ENCODE measurements at regions of chr2 and their contacts with region 1.

Region 1: DNA sequence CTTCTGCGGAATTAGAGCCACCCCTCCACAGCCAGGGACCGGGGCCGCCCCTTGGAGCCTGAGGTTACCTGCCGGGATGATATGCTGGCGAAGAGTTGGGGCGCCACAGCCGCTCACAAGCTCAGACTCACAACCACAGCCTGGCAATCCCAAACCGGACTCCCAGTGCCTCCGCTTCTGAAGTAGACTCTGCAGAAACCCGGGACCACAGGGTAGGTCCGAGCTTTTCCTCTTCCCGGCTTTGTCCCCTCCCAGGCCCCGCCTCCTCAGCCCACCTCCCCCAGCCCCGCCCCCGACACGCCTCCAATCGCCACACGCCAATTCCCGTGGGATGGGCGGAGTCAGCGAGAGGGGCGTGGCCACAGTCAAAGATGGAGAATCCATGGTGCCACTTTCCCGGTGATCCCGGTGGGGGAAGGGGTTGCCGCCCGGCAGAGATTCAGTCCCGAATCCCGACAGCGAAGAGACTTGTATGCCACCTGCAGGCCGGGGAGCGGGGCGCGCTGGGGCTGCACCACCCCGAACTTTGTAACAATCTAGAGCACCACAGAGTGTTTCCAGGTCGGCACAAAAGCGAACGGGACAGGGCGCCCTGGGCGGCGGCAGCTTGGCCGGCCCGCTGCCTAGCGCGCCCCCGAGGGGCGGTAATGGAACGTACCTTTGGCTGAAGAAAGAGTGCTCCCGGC is at the start of gene IDH1:
- DNase-seq: peak; percentile 87
- H3K4me3 Mint-ChIP-seq: peak within 1 kb of the TSS; percentile 94
- H3K27ac Mint-ChIP-seq: peak within 1 kb of the TSS; percentile 69
- H3K4me1 Mint-ChIP-seq: peaks cover 30% of the 10 kb centered on the region
- H3K27me3 Mint-ChIP-seq: no peaks in the 10 kb centered on the region
- total RNA-seq, gene IDH1: 42.7 and 46.1 TPM in 2 replicates

Region 2: GRCh38 chr2:207710814-207711740 is 543.9 kb before region 1 on chr2 and contains the start of gene CCNYL1:
- intact Hi-C with region 1: loop called (anchors 1 kb)
- DNase-seq: peak; percentile 99
- H3K4me3 Mint-ChIP-seq: peak within 1 kb of the TSS; percentile 96
- H3K27ac Mint-ChIP-seq: peak within 1 kb of the TSS; percentile 87
- H3K4me1 Mint-ChIP-seq: peaks cover 21% of the 10 kb centered on the region
- H3K27me3 Mint-ChIP-seq: no peaks in the 10 kb centered on the region
- total RNA-seq, gene CCNYL1: 6.7 and 8.2 TPM in 2 replicates

Region 3: DNA sequence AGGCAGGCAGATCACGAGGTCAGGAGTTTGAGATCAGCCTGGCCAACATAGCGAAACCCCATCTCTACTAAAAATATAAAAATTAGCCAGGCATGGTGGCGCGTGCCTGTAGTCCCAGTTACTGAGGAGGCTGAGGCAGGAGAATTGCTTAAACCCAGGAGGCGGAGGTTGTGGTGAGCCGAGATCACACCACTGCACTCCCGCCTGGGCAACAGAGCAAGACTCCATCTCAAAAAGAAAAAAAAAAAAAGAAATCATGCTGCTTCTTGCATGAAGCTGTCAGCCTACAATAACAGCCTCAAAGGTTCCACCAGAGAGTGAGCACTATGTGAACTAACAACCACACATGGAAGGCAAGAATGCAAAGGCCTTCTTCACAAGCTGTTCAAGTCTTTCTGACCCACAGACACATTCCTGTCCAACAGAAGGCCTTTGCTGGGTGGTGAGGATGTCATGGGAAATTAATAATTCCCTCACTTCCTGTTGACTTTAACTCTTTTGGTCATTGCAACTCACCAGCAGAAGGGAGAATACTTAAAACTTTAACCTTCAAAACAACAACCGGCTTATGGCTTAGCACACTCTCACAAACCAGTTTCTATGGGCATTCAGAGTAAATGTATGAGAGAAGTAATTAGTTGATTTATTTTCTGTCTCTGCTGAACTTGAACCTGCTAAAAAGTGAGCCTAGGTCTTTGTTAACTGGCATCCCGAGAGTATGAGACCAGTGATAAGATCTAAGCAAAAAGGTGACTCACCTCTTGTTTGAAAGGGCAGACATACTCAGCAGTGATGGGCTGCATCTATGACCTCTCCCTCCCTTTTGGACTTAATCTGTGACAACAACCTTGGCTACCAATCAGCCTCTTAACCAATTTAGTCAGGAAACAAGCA is 241.5 kb before region 1 on chr2:
- intact Hi-C with region 1: loop called (anchors 10 kb)
- DNase-seq: no peak
- H3K4me3 Mint-ChIP-seq: peak overlapping the region; percentile 34
- H3K27ac Mint-ChIP-seq: peak overlapping the region; percentile 83
- H3K4me1 Mint-ChIP-seq: peaks cover 42% of the 10 kb centered on the region
- H3K27me3 Mint-ChIP-seq: no peaks in the 10 kb centered on the region

Region 4: DNA sequence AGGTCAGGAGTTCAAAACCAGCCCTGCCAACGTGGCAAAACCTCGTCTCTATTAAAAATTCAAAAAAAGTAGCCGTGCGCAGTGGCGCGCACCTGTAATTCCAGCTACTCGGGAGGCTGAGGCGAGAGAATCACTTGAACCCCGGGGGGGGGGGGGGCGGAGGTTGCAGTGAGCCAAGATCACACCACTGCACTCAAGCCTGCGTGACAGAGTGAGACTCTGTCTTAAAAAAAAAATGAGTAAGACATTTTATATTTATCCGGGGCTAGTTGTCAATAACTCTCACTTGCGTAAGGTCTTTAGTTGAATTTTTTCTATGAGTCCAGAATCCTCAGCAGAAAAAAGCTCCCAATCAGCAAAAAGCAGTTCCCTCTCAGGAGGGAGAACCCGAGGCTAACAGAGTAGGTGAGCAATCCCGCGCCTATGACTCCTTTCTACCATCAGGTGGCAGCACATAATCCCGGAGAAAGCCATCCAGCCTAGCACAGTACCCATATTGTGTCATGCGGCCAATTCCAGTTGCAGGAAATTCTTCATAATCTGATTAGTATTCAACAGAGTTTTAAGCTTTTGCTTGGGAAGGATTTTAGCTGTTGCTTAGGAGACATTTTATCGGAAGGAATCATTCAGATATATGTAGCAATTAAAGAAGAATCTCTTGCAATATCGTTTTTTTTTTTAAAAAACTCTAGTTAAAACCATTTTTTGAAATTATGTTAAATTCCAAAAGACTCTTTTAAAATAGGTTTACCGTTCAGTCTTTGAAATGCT is 79.8 kb before region 1 on chr2:
- intact Hi-C with region 1: loop called (anchors 1 kb)
- DNase-seq: peak; percentile 32
- H3K4me3 Mint-ChIP-seq: no peak overlapping the region
- H3K27ac Mint-ChIP-seq: no peak overlapping the region
- H3K4me1 Mint-ChIP-seq: peaks cover 3% of the 10 kb centered on the region
- H3K27me3 Mint-ChIP-seq: peaks cover 8% of the 10 kb centered on the region

Region 5: GRCh38 chr2:208798710-208799109 is 543.7 kb after region 1 on chr2:
- intact Hi-C with region 1: no loop called
- DNase-seq: no peak
- H3K4me3 Mint-ChIP-seq: no peak overlapping the region
- H3K27ac Mint-ChIP-seq: no peak overlapping the region
- H3K4me1 Mint-ChIP-seq: no peaks in the 10 kb centered on the region
- H3K27me3 Mint-ChIP-seq: no peaks in the 10 kb centered on the region

Region 6: GRCh38 chr2:209391776-209392401 is 1136.9 kb after region 1 on chr2:
- intact Hi-C with region 1: no loop called
- DNase-seq: no peak
- H3K4me3 Mint-ChIP-seq: no peak overlapping the region
- H3K27ac Mint-ChIP-seq: no peak overlapping the region
- H3K4me1 Mint-ChIP-seq: no peaks in the 10 kb centered on the region
- H3K27me3 Mint-ChIP-seq: no peaks in the 10 kb centered on the region

Region 7: DNA sequence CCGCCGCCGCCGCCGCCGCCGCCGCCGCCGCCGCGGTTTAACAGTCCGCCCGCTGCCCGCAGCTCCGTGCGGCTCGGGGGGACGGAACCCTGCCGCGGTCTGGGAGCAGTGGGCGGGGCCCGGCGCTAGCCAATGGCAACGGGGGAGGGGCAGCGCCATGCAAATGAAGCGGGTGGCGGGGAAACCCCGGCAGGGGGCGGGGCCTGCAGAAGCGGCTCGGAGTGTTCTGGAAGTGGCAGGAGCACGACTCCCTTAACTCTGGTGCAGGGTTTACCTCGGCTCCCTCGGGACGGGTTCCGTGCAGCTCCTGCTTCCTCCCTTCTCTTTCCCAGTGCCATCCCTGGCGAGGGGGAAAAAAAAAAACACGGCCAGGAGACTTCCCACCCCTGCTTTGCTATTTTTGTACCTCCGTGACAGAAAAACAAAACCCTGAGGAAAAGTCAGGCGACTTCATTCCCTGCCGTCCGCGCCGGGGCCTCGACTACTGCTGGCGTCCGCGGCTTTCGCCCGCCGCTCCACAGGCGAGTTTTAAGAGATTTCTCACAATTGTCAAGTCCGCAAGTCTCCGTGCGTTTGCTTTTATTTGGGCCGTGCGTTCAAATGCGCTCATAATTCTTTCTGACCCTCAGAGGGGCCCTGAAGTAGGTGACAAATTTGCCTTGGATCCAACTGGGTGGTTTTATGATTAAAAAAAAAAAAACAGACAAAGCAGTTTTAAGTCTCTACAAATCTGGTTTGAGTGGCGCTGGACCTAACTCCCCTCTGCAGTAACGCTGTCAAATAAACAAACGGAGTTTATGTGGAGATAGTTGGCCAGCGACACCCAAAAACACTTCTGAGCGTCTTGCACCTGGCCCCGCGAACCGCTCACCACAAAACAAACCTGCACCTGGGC is 1916.5 kb after region 1 on chr2 and contains the start of gene KANSL1L:
- intact Hi-C with region 1: loop called (anchors 2 kb)
- DNase-seq: peak; percentile 95
- H3K4me3 Mint-ChIP-seq: peak within 1 kb of the TSS; percentile 96
- H3K27ac Mint-ChIP-seq: peak within 1 kb of the TSS; percentile 99
- H3K4me1 Mint-ChIP-seq: peaks cover 26% of the 10 kb centered on the region
- H3K27me3 Mint-ChIP-seq: peaks cover 21% of the 10 kb centered on the region
- total RNA-seq, gene KANSL1L: 4.9 and 6.5 TPM in 2 replicates